WTC11 (cell line): ENCODE measurements at regions of chr3 and their contacts with region 1.

Region 1: GRCh38 chr3:62538706-62539356 is 165.5 kb upstream of the FEZF2 start:
- DNase-seq: no peak
- ATAC-seq: peak; percentile 90
- H3K4me3 Mint-ChIP-seq: peak overlapping the region; percentile 41
- H3K27ac Mint-ChIP-seq: peak overlapping the region; percentile 81
- H3K4me1 Mint-ChIP-seq: peaks cover 71% of the 10 kb centered on the region
- H3K27me3 Mint-ChIP-seq: no peaks in the 10 kb centered on the region
- CTCF ChIP-seq: no peak

Region 2: GRCh38 chr3:62368705-62369475 is 169.9 kb before region 1 on chr3:
- CTCF ChIA-PET with region 1: interaction called, 10 read pairs
- POLR2A ChIA-PET with region 1: no interaction called
- DNase-seq: peak; percentile 77
- ATAC-seq: peak; percentile 43
- H3K4me3 Mint-ChIP-seq: peak overlapping the region; percentile 71
- H3K27ac Mint-ChIP-seq: no peak overlapping the region
- H3K4me1 Mint-ChIP-seq: peaks cover 78% of the 10 kb centered on the region
- H3K27me3 Mint-ChIP-seq: peaks cover 100% of the 10 kb centered on the region
- CTCF ChIP-seq: no peak

Region 3: DNA sequence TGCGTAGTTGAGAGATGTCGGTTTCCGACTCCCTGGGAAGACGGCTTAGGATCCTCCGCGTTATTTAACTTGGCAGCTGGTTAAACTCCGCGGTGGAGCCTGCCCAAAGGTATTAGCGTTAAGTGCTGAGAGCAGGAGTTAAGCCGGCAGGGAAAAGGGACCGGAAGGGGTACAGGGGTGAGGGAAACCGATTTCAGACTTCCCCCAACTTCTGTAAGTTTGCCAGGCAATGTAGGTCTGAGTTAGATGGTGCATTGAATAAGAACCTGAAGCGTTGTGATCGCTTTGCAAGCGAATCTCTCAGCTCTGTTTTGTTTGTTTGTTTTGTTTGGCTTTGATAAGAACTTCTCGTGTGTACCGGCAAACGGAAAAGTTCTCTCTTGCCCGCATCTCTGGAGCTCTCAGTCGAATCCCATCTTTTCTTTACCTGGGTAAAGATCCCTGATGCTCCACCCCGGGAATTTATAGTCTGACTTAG is 159.5 kb before region 1 on chr3:
- CTCF ChIA-PET with region 1: no interaction called
- POLR2A ChIA-PET with region 1: no interaction called
- DNase-seq: peak; percentile 58
- ATAC-seq: peak; percentile 6; the same call in 1 of the 2 replicates
- H3K4me3 Mint-ChIP-seq: peak overlapping the region; percentile 73
- H3K27ac Mint-ChIP-seq: no peak overlapping the region
- H3K4me1 Mint-ChIP-seq: peaks cover 42% of the 10 kb centered on the region
- H3K27me3 Mint-ChIP-seq: peaks cover 99% of the 10 kb centered on the region
- CTCF ChIP-seq: no peak

Region 4: DNA sequence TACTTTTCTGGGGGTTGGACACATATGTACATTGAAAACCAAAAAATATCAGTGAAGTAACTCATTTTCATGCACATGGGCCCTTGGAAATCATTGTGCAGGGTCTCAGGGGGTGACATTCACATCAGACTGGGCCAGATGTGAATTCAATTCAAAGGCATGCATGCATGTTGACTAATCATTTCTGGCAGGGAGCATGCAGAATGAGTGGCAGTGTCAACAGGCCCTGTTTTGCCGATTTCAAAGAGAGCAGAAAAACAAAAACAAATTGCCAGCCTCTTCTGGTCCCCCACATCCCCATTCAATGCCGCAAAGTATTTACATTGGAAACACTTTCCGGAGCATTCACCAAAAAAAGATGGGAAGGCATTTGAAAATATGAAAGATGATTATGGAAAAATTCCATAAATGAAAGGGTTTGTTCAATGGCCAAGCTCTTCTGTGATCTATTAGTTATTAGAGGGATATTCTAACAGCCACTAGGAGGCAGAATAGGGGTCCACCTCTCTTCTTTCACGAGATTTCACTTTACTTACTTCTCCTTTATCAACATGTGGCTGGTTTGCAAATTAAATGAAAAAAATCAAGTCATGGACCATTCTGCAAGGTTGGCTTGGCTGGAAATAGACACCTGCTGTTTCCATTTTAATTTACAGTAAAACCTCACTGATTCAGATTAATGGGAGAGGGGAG is 45.6 kb before region 1 on chr3:
- CTCF ChIA-PET with region 1: interaction called, 14 read pairs
- POLR2A ChIA-PET with region 1: no interaction called
- DNase-seq: no peak
- ATAC-seq: no peak
- H3K4me3 Mint-ChIP-seq: no peak overlapping the region
- H3K27ac Mint-ChIP-seq: no peak overlapping the region
- H3K4me1 Mint-ChIP-seq: no peaks in the 10 kb centered on the region
- H3K27me3 Mint-ChIP-seq: no peaks in the 10 kb centered on the region
- CTCF ChIP-seq: peak; percentile 23; the same call in 1 of the 2 replicates

Region 5: GRCh38 chr3:62558549-62559112 is 19.8 kb after region 1 on chr3:
- CTCF ChIA-PET with region 1: interaction called, 11 read pairs
- POLR2A ChIA-PET with region 1: no interaction called
- DNase-seq: peak; percentile 69
- ATAC-seq: peak; percentile 90
- H3K4me3 Mint-ChIP-seq: no peak overlapping the region
- H3K27ac Mint-ChIP-seq: no peak overlapping the region
- H3K4me1 Mint-ChIP-seq: peaks cover 20% of the 10 kb centered on the region
- H3K27me3 Mint-ChIP-seq: peaks cover 4% of the 10 kb centered on the region
- CTCF ChIP-seq: peak; percentile 53